ENCODE measurements at regions of chr3 and their contacts with region 1.

Region 1: DNA sequence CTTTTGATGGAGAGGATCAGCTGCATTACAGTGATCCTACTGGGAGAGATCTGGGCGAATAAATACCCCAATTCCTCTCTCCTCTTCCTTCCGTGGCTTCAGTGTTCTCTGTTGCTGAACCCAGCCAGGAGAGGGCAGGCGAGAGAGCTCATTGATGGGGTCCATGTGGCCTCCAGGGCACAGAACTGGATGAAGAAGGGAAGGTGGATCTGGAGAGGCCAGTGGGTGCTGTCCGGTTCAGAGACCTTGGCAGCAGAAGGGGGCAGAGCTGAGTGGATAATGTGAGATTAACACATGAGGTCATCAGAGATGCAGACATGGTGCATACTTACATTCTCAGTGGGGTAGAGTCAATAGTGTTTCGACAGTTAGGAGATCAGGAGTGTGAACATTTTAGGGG is 193.6 kb downstream of the CLSTN2 start:
- DNase-seq: peak in 3 of 5 donors; percentile 13 to 45 (median 43)
- ATAC-seq: peak in 2 of 4 donors; percentile 67 to 76
- H3K4me3 ChIP-seq: no peak overlapping the region
- H3K27ac ChIP-seq: no peak overlapping the region
- H3K4me1 ChIP-seq: no peaks in the 10 kb centered on the region
- H3K27me3 ChIP-seq: peaks cover 0 to 4% (median 0%) of the 10 kb centered on the region in 9 donors
- CTCF ChIP-seq: peak in 11 of 12 donors; percentile 11 to 58 (median 30)
- POLR2A ChIP-seq: no peak

Region 2: GRCh38 chr3:140206196-140207048 is 77.8 kb after region 1 on chr3:
- intact Hi-C with region 1: loop called in 4 of 10 experiments (anchors 5 to 10 kb)
- DNase-seq: peak in 1 of 5 donors; percentile 29
- ATAC-seq: peak; percentile 61 to 76 (median 67)
- H3K4me3 ChIP-seq: no peak overlapping the region
- H3K27ac ChIP-seq: no peak overlapping the region
- H3K4me1 ChIP-seq: peaks cover 0 to 6% (median 0%) of the 10 kb centered on the region in 12 donors
- H3K27me3 ChIP-seq: no peaks in the 10 kb centered on the region
- CTCF ChIP-seq: peak in 9 of 12 donors; percentile 18 to 41 (median 33)
- POLR2A ChIP-seq: no peak